Right lobe of liver (tissue), 6 donors: ENCODE measurements at regions of chr2 and their contacts with region 1.

Region 1: GRCh38 chr2:172102391-172103278 is at the start of gene DLX2:
- DNase-seq: peak; percentile 78 to 85 (median 81)
- ATAC-seq: peak; percentile 56 to 75 (median 62)
- H3K4me3 ChIP-seq: peak within 1 kb of the TSS; percentile 36 to 45 (median 41)
- H3K27ac ChIP-seq: no peak within 1 kb of the TSS
- H3K4me1 ChIP-seq: peaks cover 0 to 50% (median 11%) of the 10 kb centered on the region in 4 donors
- H3K27me3 ChIP-seq: peaks cover 45 to 94% of the 10 kb centered on the region in 2 donors
- CTCF ChIP-seq: no peak
- POLR2A ChIP-seq: no peak
- total RNA-seq, gene DLX2: not detected

Region 2: DNA sequence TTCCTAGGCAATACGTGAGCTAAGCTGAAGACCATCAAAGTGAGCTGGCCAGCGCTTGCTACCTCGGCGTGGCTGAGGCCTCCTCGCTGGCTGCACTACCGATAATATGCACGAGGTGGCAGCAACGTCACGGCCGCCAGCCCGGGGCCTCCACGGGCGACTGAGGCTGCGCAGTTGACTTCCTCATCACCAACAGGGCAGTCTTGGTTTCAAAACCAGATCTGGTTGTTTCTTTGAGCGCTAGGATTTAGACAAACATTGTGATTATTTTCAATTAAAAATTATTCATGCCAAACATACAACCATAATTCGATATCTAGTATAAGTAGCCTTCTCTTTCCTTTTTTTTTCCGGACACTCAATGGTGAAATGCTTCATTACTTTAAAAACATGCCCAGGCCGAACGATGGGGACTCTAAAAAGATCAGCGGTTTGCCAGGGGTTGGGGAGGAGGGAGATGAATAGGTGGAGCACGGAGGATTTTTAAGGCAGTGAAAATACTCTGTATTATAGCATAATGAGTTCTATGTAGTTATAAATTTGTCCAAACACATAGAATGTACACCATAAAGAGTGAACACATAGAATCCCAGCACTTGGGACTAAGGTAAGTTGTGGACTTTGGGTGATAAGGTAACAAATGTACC is 528.4 kb before region 1 on chr2:
- intact Hi-C with region 1: loop called in 1 of 2 experiments (anchors 10 kb)
- DNase-seq: peak; percentile 77 to 85 (median 78)
- ATAC-seq: peak; percentile 99 to 100 (median 100)
- H3K4me3 ChIP-seq: no peak overlapping the region
- H3K27ac ChIP-seq: no peak overlapping the region
- H3K4me1 ChIP-seq: no peaks in the 10 kb centered on the region
- H3K27me3 ChIP-seq: no peaks in the 10 kb centered on the region
- CTCF ChIP-seq: peak; percentile 79 to 98 (median 94)
- POLR2A ChIP-seq: no peak

Region 3: DNA sequence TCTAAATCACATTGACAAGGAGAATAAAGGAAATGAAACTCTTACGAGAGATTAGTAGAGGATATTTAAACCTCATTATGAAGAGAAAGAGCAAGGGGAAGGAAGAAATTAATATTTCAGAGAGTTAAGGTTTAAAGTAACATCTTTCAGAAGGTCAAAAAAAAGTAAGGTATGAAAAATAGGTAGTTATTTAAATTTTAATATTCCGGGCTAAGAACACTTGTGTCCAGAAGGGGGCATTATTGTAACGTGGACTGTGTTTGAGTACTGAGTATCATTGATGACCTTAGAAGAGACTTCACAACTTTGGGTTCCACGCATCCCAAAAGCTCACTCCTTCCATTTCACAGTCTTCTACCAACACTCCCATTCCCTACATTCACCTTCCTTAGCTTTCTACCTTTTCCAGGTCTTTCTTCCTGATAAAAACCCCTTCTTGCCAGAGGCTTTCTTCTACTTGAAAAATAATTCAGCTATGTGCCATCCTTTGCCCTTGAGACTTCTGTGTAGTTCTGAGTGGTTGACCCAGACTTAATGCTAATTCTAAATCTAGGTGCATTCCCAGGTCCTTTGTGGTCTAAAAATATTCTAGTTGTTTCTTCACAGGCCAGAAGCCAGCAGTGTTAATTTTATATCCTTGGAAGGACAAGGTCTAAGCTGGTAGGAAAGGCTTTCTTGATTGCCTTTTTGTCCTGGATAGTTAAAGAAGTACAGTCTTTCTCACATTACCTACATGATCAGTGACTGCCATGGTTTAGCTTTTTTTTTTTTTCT is 398.9 kb before region 1 on chr2:
- intact Hi-C with region 1: loop called in 1 of 2 experiments (anchors 10 kb)
- DNase-seq: no peak
- ATAC-seq: peak in 3 of 4 donors; percentile 45 to 65 (median 46)
- H3K4me3 ChIP-seq: no peak overlapping the region
- H3K27ac ChIP-seq: no peak overlapping the region
- H3K4me1 ChIP-seq: peaks cover 0 to 9% (median 0%) of the 10 kb centered on the region in 4 donors
- H3K27me3 ChIP-seq: no peaks in the 10 kb centered on the region
- CTCF ChIP-seq: peak; percentile 41 to 54 (median 48)
- POLR2A ChIP-seq: no peak

Region 4: DNA sequence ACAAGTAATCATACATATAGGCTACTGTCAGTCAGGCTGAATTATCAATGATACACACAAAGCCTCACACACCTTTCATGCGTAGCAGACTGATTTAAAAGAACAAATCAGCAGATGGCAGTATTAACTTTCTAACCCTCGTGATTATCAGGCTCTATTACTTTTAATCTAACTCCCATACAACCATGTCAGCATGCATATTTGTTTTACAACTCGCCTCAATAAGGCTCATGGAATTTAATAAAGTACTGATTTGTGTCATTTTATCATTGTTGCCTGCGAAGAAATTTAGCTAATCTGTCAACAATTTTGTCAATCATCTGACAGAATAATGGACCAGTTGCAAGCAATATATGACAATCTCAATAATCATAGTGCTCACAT is 291.4 kb before region 1 on chr2:
- intact Hi-C with region 1: loop called (anchors 10 kb)
- DNase-seq: no peak
- ATAC-seq: peak; percentile 86 to 90 (median 88)
- H3K4me3 ChIP-seq: no peak overlapping the region
- H3K27ac ChIP-seq: no peak overlapping the region
- H3K4me1 ChIP-seq: peaks cover 0 to 7% (median 0%) of the 10 kb centered on the region in 4 donors
- H3K27me3 ChIP-seq: no peaks in the 10 kb centered on the region
- CTCF ChIP-seq: peak; percentile 47 to 67 (median 56)
- POLR2A ChIP-seq: no peak